T-cell (primary cell): ENCODE measurements at regions of chr1 and their contacts with region 1.

Region 1: GRCh38 chr1:23809751-23810171 is 9.2 kb upstream of the GALE start:
- DNase-seq: peak; percentile 64 to 88 (median 79)
- ATAC-seq: peak; percentile 93 to 97 (median 96)
- H3K4me3 ChIP-seq: no peak overlapping the region
- H3K4me3 Mint-ChIP-seq: no peak overlapping the region
- H3K27ac ChIP-seq: peak overlapping the region; percentile 28
- H3K27ac Mint-ChIP-seq: peak overlapping the region; percentile 36 to 79
- H3K4me1 ChIP-seq: peaks cover 0 to 6% of the 10 kb centered on the region in 2 experiments
- H3K4me1 Mint-ChIP-seq: peaks cover 14 to 17% (median 15%) of the 10 kb centered on the region in 3 donors
- H3K27me3 ChIP-seq: no peaks in the 10 kb centered on the region
- H3K27me3 Mint-ChIP-seq: no peaks in the 10 kb centered on the region

Region 2: DNA sequence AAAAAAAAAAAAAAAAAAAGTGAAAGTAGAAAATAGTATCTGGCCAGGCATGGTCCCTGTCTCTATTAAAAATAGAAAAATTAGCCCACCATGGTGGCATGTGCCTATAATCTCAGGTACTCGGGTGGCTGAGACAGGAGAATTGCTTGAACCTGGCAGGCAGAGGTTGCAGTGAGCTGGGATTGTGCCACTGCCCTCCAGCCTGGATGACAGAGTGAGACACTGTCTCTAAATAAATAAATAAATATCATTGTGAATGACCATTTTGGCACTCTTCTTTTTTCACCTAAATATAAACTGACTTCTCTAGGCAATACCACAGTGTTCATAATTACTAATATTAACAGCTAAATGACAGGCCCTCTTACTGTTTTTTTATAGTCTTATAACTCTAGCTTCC is 51.9 kb before region 1 on chr1:
- CTCF ChIA-PET with region 1: interaction called in 1 of 2 experiments, 10 read pairs
- POLR2A ChIA-PET with region 1: no interaction called
- DNase-seq: no peak
- ATAC-seq: no peak
- H3K4me3 ChIP-seq: no peak overlapping the region
- H3K4me3 Mint-ChIP-seq: no peak overlapping the region
- H3K27ac ChIP-seq: no peak overlapping the region
- H3K27ac Mint-ChIP-seq: no peak overlapping the region
- H3K4me1 ChIP-seq: no peaks in the 10 kb centered on the region
- H3K4me1 Mint-ChIP-seq: peaks cover 2 to 5% (median 2%) of the 10 kb centered on the region in 3 donors
- H3K27me3 ChIP-seq: no peaks in the 10 kb centered on the region
- H3K27me3 Mint-ChIP-seq: no peaks in the 10 kb centered on the region

Region 3: GRCh38 chr1:23777979-23778814 is 31.6 kb before region 1 on chr1 and contains the start of gene PITHD1:
- CTCF ChIA-PET with region 1: interaction called in 1 of 2 experiments, 10 read pairs
- POLR2A ChIA-PET with region 1: interaction called in 1 of 2 experiments, 3 read pairs
- DNase-seq: peak; percentile 59 to 89 (median 73)
- ATAC-seq: peak; percentile 84 to 86 (median 86)
- H3K4me3 ChIP-seq: peak within 1 kb of the TSS; percentile 70 to 93
- H3K4me3 Mint-ChIP-seq: peak within 1 kb of the TSS; percentile 86 to 93 (median 88)
- H3K27ac ChIP-seq: peak within 1 kb of the TSS; percentile 72
- H3K27ac Mint-ChIP-seq: peak within 1 kb of the TSS; percentile 89 to 93
- H3K4me1 ChIP-seq: peaks cover 16 to 31% of the 10 kb centered on the region in 2 experiments
- H3K4me1 Mint-ChIP-seq: peaks cover 30 to 50% (median 49%) of the 10 kb centered on the region in 3 donors
- H3K27me3 ChIP-seq: no peaks in the 10 kb centered on the region
- H3K27me3 Mint-ChIP-seq: no peaks in the 10 kb centered on the region
- total RNA-seq, gene PITHD1: 60.7 to 87.1 (median 70.8) TPM

Region 4: GRCh38 chr1:23825076-23825761 is 15.5 kb after region 1 on chr1 and contains the start of gene HMGCL:
- CTCF ChIA-PET with region 1: interaction called, 8 to 21 read pairs
- POLR2A ChIA-PET with region 1: interaction called in 1 of 2 experiments, 6 read pairs
- DNase-seq: peak; percentile 72 to 91 (median 85)
- ATAC-seq: peak; percentile 93 to 98 (median 98)
- H3K4me3 ChIP-seq: peak within 1 kb of the TSS; percentile 99 to 100
- H3K4me3 Mint-ChIP-seq: peak within 1 kb of the TSS; percentile 93 to 95 (median 94)
- H3K27ac ChIP-seq: peak within 1 kb of the TSS; percentile 96
- H3K27ac Mint-ChIP-seq: peak within 1 kb of the TSS; percentile 95 to 97
- H3K4me1 ChIP-seq: peaks cover 5 to 13% of the 10 kb centered on the region in 2 experiments
- H3K4me1 Mint-ChIP-seq: peaks cover 22 to 34% (median 26%) of the 10 kb centered on the region in 3 donors
- H3K27me3 ChIP-seq: no peaks in the 10 kb centered on the region
- H3K27me3 Mint-ChIP-seq: no peaks in the 10 kb centered on the region
- total RNA-seq, gene HMGCL: 14.5 to 39.0 (median 32.9) TPM

Region 5: DNA sequence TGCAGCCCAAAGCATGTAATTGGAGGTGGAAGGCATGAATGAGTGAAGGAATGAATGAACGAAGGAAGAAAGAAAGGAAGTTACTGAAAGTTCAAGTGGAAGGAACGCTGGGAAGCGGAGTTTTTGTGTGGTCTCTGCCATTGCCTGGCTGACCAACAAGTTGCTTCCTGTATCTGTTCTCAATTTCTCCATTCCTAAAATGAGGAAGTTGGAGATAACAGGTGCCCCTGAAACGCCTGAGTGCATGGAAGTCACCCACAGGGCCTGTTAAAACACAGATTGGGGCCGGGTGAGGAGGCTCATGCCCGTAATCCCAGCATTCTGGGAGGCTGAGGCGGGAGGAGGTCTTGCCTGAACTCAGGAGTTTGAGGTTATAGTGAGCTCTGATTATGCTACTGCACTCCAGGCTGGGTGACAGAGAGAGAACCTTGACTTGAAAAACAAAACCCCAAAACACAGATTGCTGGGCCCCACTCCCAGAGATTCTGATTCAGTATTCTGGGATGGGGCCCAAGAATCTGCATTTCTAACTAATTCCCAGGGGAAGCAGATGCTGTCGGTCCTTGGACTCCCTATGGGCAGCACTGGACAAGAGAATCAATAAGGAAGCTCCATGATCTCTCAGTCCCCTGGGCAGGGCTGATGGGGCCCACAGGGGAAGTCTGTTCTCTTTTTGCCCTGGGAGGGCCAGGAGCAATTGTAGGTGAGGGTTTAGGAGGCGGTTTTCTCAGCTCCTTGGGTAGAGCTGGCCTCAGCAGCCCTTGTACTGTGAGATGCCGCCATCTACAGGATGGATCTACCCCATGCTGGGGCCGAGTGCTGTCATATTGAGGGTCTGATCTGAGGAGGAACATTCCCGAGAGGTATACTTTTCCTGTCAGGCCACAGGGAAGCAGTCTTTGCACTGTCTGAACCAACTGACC is 106.7 kb after region 1 on chr1:
- CTCF ChIA-PET with region 1: interaction called, 3 to 30 read pairs
- POLR2A ChIA-PET with region 1: no interaction called
- DNase-seq: peak in 34 of 35 experiments; percentile 18 to 78 (median 53)
- ATAC-seq: peak; percentile 77 to 97 (median 85)
- H3K4me3 ChIP-seq: no peak overlapping the region
- H3K4me3 Mint-ChIP-seq: no peak overlapping the region
- H3K27ac ChIP-seq: no peak overlapping the region
- H3K27ac Mint-ChIP-seq: no peak overlapping the region
- H3K4me1 ChIP-seq: peaks cover 8 to 39% of the 10 kb centered on the region in 2 experiments
- H3K4me1 Mint-ChIP-seq: peaks cover 30 to 36% (median 32%) of the 10 kb centered on the region in 3 donors
- H3K27me3 ChIP-seq: no peaks in the 10 kb centered on the region
- H3K27me3 Mint-ChIP-seq: no peaks in the 10 kb centered on the region

Region 6: GRCh38 chr1:23995431-23995837 is 185.7 kb after region 1 on chr1:
- CTCF ChIA-PET with region 1: no interaction called
- POLR2A ChIA-PET with region 1: no interaction called
- DNase-seq: no peak
- ATAC-seq: no peak
- H3K4me3 ChIP-seq: no peak overlapping the region
- H3K4me3 Mint-ChIP-seq: no peak overlapping the region
- H3K27ac ChIP-seq: no peak overlapping the region
- H3K27ac Mint-ChIP-seq: no peak overlapping the region
- H3K4me1 ChIP-seq: no peaks in the 10 kb centered on the region
- H3K4me1 Mint-ChIP-seq: peaks cover 0 to 3% (median 0%) of the 10 kb centered on the region in 3 donors
- H3K27me3 ChIP-seq: no peaks in the 10 kb centered on the region
- H3K27me3 Mint-ChIP-seq: no peaks in the 10 kb centered on the region